ENCODE measurements at regions of chr16 and their contacts with region 1.

Region 1: DNA sequence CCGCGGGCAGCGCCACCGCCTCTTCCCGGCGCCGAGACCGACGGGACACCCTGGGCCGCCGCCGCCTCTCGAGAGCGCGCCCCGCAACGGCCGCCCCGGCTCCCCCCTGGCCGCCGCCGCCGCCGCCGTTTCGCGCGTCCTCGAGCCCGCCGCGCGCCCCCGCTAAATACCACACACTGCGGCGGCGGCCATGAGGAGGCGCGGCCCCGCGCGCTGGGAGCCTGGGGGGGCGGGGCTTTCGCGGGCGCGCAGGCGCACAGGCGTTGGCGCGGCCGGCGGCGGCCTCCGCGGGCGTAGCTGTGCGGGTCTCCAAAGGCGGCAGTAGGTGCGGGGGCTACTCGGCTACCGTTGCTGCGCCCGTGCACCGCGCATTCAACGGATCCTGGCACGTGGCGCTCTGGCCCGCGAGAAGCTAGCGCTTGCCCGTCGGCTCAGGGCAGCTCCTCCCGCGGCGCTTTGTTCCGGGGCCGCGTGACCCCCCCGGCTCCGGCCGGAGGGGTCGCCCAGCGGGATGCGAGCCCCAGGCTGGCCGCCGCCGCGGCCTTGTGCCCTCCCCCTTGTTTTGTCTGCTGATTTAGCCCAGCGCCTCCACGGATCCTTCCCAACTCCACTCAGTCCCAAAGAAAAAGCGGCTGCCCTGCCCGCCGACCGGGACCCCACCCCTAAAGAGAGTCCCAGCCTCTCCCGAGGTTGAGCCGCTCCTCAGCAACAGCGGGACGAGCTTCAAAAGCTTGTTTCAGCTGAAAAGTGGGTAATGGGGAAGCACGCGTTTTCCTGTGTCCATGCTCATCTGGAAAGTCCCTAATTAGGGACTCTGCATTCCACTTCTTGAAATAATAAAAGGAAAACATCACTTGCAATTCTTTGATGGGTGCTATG is at the start of gene SIAH1:
- DNase-seq: peak; percentile 94
- ATAC-seq: peak; percentile 81
- H3K4me3 ChIP-seq: peak within 1 kb of the TSS; percentile 66 to 95 (median 93)
- H3K4me3 Mint-ChIP-seq: peak within 1 kb of the TSS; percentile 93
- H3K27ac ChIP-seq: peak within 1 kb of the TSS; percentile 69 to 88
- H3K27ac Mint-ChIP-seq: peak within 1 kb of the TSS; percentile 92
- H3K4me1 ChIP-seq: peaks cover 17 to 23% of the 10 kb centered on the region in 2 donors
- H3K4me1 Mint-ChIP-seq: peaks cover 25% of the 10 kb centered on the region
- H3K27me3 ChIP-seq: no peaks in the 10 kb centered on the region
- H3K27me3 Mint-ChIP-seq: no peaks in the 10 kb centered on the region
- CTCF ChIP-seq: no peak
- total RNA-seq, gene SIAH1: 47.6 and 54.7 TPM in 2 replicates

Region 2: DNA sequence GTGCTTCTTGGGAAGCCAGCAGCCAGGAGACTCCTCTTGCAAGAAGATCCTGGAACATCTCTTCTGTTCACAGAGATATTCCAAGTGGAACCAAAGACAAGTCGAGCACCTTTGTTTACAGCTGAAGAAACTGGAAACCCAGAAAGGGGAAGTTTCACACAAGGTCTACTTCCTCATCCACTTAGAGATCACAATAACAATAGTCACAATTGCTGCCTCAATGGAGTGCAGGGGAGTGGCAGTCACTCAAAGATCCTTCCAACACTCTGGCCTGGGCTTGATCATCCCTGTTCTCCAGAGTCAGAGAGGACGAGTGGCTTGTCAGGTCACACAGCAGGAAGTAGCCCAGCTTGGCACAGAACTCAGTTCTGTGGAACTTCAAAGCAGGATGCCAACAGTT is 46.6 kb after region 1 on chr16:
- CTCF ChIA-PET with region 1: interaction called, 4 read pairs
- POLR2A ChIA-PET with region 1: interaction called, 12 read pairs
- intact Hi-C with region 1: loop called (anchors 1 kb)
- DNase-seq: peak; percentile 80
- ATAC-seq: peak; percentile 86
- H3K4me3 ChIP-seq: peak overlapping the region in 1 of 5 experiments; percentile 38
- H3K4me3 Mint-ChIP-seq: peak overlapping the region; percentile 87
- H3K27ac ChIP-seq: peak overlapping the region; percentile 81 to 89
- H3K27ac Mint-ChIP-seq: peak overlapping the region; percentile 100
- H3K4me1 ChIP-seq: peaks cover 55 to 65% of the 10 kb centered on the region in 2 donors
- H3K4me1 Mint-ChIP-seq: peaks cover 71% of the 10 kb centered on the region
- H3K27me3 ChIP-seq: no peaks in the 10 kb centered on the region
- H3K27me3 Mint-ChIP-seq: no peaks in the 10 kb centered on the region
- CTCF ChIP-seq: no peak

Measured in B cell (primary cell).